T-cell (primary cell): ENCODE measurements at regions of chr11 and their contacts with region 1.

Region 1: DNA sequence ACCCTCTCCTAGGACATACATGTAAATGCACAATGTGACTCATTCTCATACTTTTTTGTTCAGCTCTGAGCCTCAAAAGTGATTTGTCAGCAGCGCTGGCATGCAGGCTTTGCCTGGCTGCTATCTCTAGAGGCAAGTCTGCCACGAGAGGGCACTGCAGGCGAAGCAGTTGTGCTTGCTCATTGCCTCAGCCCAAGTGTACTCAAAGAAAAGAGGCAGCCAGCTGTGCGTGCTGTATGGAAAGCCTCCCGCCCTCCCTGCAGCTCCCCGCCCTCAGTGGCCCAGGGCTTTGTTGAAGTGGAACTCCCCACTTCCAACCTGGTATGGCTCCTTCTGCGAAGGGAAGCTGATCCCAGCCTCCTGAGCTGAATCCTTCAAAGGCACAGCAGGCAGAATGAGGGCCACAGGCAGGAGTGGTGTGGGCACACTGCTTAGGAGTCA is 16.3 kb downstream of the SDHAF2 start:
- DNase-seq: peak; percentile 29 to 73 (median 60)
- ATAC-seq: peak; percentile 74 to 93 (median 82)
- H3K4me3 ChIP-seq: no peak overlapping the region
- H3K4me3 Mint-ChIP-seq: no peak overlapping the region
- H3K27ac ChIP-seq: no peak overlapping the region
- H3K27ac Mint-ChIP-seq: peak overlapping the region in 1 of 2 donors; percentile 22
- H3K4me1 ChIP-seq: peaks cover 0 to 5% of the 10 kb centered on the region in 2 experiments
- H3K4me1 Mint-ChIP-seq: peaks cover 10 to 27% (median 20%) of the 10 kb centered on the region in 3 donors
- H3K27me3 ChIP-seq: no peaks in the 10 kb centered on the region
- H3K27me3 Mint-ChIP-seq: no peaks in the 10 kb centered on the region

Region 2: DNA sequence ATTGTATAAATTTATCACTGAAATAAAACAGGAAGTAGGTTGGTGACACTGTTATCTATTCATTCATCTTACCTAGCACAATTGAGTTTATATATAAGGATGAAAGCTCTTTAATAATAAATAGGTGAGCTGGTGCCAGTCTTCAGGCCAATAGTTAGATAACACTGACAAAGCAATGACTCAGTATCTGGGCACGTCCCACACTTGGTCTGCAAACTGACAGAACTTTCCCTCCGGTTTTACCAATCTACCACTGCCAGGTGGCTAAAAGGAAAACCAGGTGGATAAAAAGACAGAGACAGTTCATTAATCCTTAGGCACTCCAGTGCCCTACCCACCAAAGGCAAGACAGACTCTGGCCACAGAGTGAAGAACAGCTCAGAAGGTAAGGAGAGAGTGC is 131.0 kb before region 1 on chr11:
- CTCF ChIA-PET with region 1: no interaction called
- POLR2A ChIA-PET with region 1: interaction called in 1 of 2 experiments, 15 read pairs
- DNase-seq: no peak
- ATAC-seq: no peak
- H3K4me3 ChIP-seq: no peak overlapping the region
- H3K4me3 Mint-ChIP-seq: no peak overlapping the region
- H3K27ac ChIP-seq: no peak overlapping the region
- H3K27ac Mint-ChIP-seq: no peak overlapping the region
- H3K4me1 ChIP-seq: no peaks in the 10 kb centered on the region
- H3K4me1 Mint-ChIP-seq: no peaks in the 10 kb centered on the region
- H3K27me3 ChIP-seq: no peaks in the 10 kb centered on the region
- H3K27me3 Mint-ChIP-seq: no peaks in the 10 kb centered on the region

Region 3: GRCh38 chr11:61627567-61628445 is 181.6 kb after region 1 on chr11:
- CTCF ChIA-PET with region 1: no interaction called
- POLR2A ChIA-PET with region 1: no interaction called
- DNase-seq: peak in 15 of 35 experiments; percentile 2 to 40 (median 11)
- ATAC-seq: no peak
- H3K4me3 ChIP-seq: no peak overlapping the region
- H3K4me3 Mint-ChIP-seq: no peak overlapping the region
- H3K27ac ChIP-seq: no peak overlapping the region
- H3K27ac Mint-ChIP-seq: no peak overlapping the region
- H3K4me1 ChIP-seq: no peaks in the 10 kb centered on the region
- H3K4me1 Mint-ChIP-seq: no peaks in the 10 kb centered on the region
- H3K27me3 ChIP-seq: peaks cover 0 to 43% of the 10 kb centered on the region in 2 experiments
- H3K27me3 Mint-ChIP-seq: peaks cover 10 to 29% of the 10 kb centered on the region in 2 donors